ENCODE measurements at regions of chr1 and their contacts with region 1.

Region 1: GRCh38 chr1:171313835-171314320 is at the start of gene FMO4:
- DNase-seq: peak; percentile 85 to 94 (median 92)
- H3K4me3 ChIP-seq: peak within 1 kb of the TSS in 1 of 2 donors; percentile 21
- H3K4me3 Mint-ChIP-seq: peak within 1 kb of the TSS; percentile 67 to 85 (median 80)
- H3K27ac ChIP-seq: peak within 1 kb of the TSS; percentile 54
- H3K27ac Mint-ChIP-seq: peak within 1 kb of the TSS; percentile 72 to 94 (median 92)
- H3K4me1 ChIP-seq: peaks cover 9% of the 10 kb centered on the region
- H3K4me1 Mint-ChIP-seq: peaks cover 11 to 26% (median 21%) of the 10 kb centered on the region in 4 donors
- H3K27me3 ChIP-seq: no peaks in the 10 kb centered on the region
- H3K27me3 Mint-ChIP-seq: no peaks in the 10 kb centered on the region
- total RNA-seq, gene FMO4: 2.7 to 3.6 TPM

Region 2: GRCh38 chr1:169928438-169929209 is 1385.3 kb before region 1 on chr1:
- CTCF ChIA-PET with region 1: interaction called, 7 read pairs
- POLR2A ChIA-PET with region 1: interaction called, 3 read pairs
- intact Hi-C with region 1: loop called (anchors 5 kb)
- DNase-seq: peak in 4 of 5 donors; percentile 45 to 58 (median 49)
- H3K4me3 ChIP-seq: no peak overlapping the region
- H3K4me3 Mint-ChIP-seq: peak overlapping the region in 1 of 8 donors; percentile 2
- H3K27ac ChIP-seq: no peak overlapping the region
- H3K27ac Mint-ChIP-seq: peak overlapping the region in 1 of 7 donors; percentile 74
- H3K4me1 ChIP-seq: peaks cover 9% of the 10 kb centered on the region
- H3K4me1 Mint-ChIP-seq: peaks cover 6 to 11% (median 7%) of the 10 kb centered on the region in 4 donors
- H3K27me3 ChIP-seq: no peaks in the 10 kb centered on the region
- H3K27me3 Mint-ChIP-seq: no peaks in the 10 kb centered on the region

Region 3: DNA sequence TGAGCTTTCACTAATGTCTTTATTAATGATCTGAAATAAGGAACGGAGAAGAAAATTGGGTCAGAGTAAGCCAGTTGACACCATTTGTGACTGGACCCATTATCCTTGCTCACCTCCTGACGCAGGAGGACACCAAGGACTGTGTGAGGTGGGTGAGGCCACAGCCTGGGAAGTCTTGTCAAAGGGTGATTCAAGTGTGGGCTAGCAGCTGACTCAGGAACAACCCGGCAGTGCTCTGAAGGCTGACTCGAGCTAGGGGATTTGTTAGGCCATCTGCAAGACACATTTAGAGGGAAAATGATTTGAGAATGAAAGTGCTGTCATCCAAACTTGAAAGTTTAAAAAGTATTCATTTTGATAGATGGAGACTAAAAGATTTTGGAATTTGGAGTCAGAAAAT is 628.7 kb before region 1 on chr1:
- CTCF ChIA-PET with region 1: interaction called, 27 read pairs
- POLR2A ChIA-PET with region 1: no interaction called
- intact Hi-C with region 1: no loop called
- DNase-seq: no peak
- H3K4me3 ChIP-seq: no peak overlapping the region
- H3K4me3 Mint-ChIP-seq: no peak overlapping the region
- H3K27ac ChIP-seq: no peak overlapping the region
- H3K27ac Mint-ChIP-seq: no peak overlapping the region
- H3K4me1 ChIP-seq: no peaks in the 10 kb centered on the region
- H3K4me1 Mint-ChIP-seq: peaks cover 0 to 1% (median 0%) of the 10 kb centered on the region in 4 donors
- H3K27me3 ChIP-seq: no peaks in the 10 kb centered on the region
- H3K27me3 Mint-ChIP-seq: peaks cover 13 to 18% of the 10 kb centered on the region in 2 donors

Region 4: GRCh38 chr1:171081314-171081753 is 232.5 kb before region 1 on chr1:
- CTCF ChIA-PET with region 1: interaction called, 5 read pairs
- POLR2A ChIA-PET with region 1: no interaction called
- intact Hi-C with region 1: loop called (anchors 5 kb)
- DNase-seq: no peak
- H3K4me3 ChIP-seq: no peak overlapping the region
- H3K4me3 Mint-ChIP-seq: no peak overlapping the region
- H3K27ac ChIP-seq: no peak overlapping the region
- H3K27ac Mint-ChIP-seq: no peak overlapping the region
- H3K4me1 ChIP-seq: no peaks in the 10 kb centered on the region
- H3K4me1 Mint-ChIP-seq: no peaks in the 10 kb centered on the region
- H3K27me3 ChIP-seq: no peaks in the 10 kb centered on the region
- H3K27me3 Mint-ChIP-seq: peaks cover 3 to 5% of the 10 kb centered on the region in 2 donors

Region 5: GRCh38 chr1:171329251-171329650 is 15.4 kb after region 1 on chr1:
- CTCF ChIA-PET with region 1: interaction called, 13 read pairs
- POLR2A ChIA-PET with region 1: no interaction called
- intact Hi-C with region 1: no loop called
- DNase-seq: no peak
- H3K4me3 ChIP-seq: no peak overlapping the region
- H3K4me3 Mint-ChIP-seq: no peak overlapping the region
- H3K27ac ChIP-seq: no peak overlapping the region
- H3K27ac Mint-ChIP-seq: peak overlapping the region in 1 of 7 donors; percentile 23
- H3K4me1 ChIP-seq: no peaks in the 10 kb centered on the region
- H3K4me1 Mint-ChIP-seq: no peaks in the 10 kb centered on the region
- H3K27me3 ChIP-seq: no peaks in the 10 kb centered on the region
- H3K27me3 Mint-ChIP-seq: no peaks in the 10 kb centered on the region

Region 6: DNA sequence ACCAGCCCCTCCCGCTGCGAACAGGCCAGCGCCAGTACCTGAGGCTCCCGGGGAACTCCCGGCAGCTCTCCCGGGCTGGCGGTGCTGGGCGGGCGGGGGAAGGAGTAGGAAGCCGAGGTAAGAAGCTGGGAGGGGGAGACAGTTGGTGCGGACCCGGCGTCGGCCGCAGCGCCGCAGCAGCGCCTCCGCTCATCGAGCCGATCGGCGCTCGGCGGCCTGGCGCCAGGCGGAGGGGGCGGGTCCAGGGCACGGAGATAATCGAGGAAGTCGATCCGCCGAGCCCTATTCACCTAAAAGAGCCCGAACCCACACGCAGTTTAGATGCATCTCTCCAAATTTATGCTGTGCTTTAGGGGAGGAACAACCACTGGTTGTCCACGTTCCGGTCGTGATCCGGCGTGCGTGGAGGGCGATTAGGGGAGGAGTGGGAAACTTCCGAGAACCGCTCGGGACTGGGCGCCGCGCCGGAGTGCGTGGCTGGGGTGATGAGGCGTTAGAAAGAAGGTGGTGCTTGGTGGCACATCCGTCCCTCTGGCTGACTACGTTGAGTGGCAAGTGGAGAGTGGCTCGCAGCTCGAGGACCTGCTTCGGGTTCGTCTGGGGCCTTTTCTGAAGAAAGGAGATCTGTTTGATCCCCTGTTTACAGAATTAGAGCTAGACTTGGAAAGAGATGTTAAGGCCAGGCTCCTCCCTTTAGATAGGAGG is 428.1 kb after region 1 on chr1 and contains the start of gene VAMP4:
- CTCF ChIA-PET with region 1: interaction called, 5 read pairs
- POLR2A ChIA-PET with region 1: no interaction called
- intact Hi-C with region 1: loop called (anchors 5 kb)
- DNase-seq: peak; percentile 85 to 90 (median 89)
- H3K4me3 ChIP-seq: peak within 1 kb of the TSS; percentile 84 to 92
- H3K4me3 Mint-ChIP-seq: peak within 1 kb of the TSS; percentile 97 to 100 (median 100)
- H3K27ac ChIP-seq: peak within 1 kb of the TSS; percentile 96
- H3K27ac Mint-ChIP-seq: peak within 1 kb of the TSS; percentile 98 to 100 (median 99)
- H3K4me1 ChIP-seq: peaks cover 44% of the 10 kb centered on the region
- H3K4me1 Mint-ChIP-seq: peaks cover 31 to 62% (median 48%) of the 10 kb centered on the region in 4 donors
- H3K27me3 ChIP-seq: no peaks in the 10 kb centered on the region
- H3K27me3 Mint-ChIP-seq: no peaks in the 10 kb centered on the region
- total RNA-seq, gene VAMP4: 29.4 to 32.0 TPM